GM12878 (cell line): ENCODE measurements at regions of chr7 and their contacts with region 1.

Region 1: DNA sequence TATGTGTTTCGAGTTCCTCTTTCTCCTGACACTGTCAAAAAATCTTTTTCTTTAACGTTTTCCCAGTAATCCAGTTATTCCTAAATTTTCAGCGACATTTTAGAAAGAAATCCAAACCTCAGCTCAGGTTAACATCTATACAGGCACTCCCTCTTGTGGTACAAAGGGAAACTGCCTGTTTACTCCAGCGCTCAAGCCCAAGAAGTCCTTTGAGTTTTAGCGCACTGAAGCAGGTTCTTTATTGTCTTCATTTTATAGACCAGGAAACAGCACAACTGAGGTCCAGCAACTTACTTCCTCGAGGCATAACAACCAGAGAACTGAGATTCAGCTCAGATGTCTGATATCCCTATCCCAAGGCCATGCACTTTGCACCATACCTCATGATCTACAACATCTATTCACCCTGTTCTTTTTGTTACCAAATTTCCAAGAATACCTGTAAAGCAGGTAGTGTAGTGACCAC is 287.2 kb upstream of the MKLN1 start:
- DNase-seq: no peak
- ATAC-seq: peak; percentile 83
- H3K4me3 ChIP-seq: no peak overlapping the region
- H3K27ac ChIP-seq: peak overlapping the region; percentile 72
- H3K4me1 ChIP-seq: peaks cover 22% of the 10 kb centered on the region
- H3K27me3 ChIP-seq: no peaks in the 10 kb centered on the region
- CTCF ChIP-seq: peak; percentile 84 to 96 (median 88)
- EP300 ChIP-seq: no peak
- POLR2A ChIP-seq: no peak
- RAD21 ChIP-seq: peak; percentile 97

Region 2: GRCh38 chr7:130875265-130875741 is 165.2 kb before region 1 on chr7:
- CTCF ChIA-PET with region 1: interaction called, 46 read pairs
- POLR2A ChIA-PET with region 1: no interaction called
- RAD21 ChIA-PET with region 1: interaction called, 8 read pairs
- SMC1A ChIA-PET with region 1: interaction called, 20 read pairs
- in situ Hi-C with region 1: no loop called
- intact Hi-C with region 1: loop called (anchors 1 kb)
- DNase-seq: no peak
- ATAC-seq: peak; percentile 90
- H3K4me3 ChIP-seq: no peak overlapping the region
- H3K27ac ChIP-seq: no peak overlapping the region
- H3K4me1 ChIP-seq: no peaks in the 10 kb centered on the region
- H3K27me3 ChIP-seq: no peaks in the 10 kb centered on the region
- CTCF ChIP-seq: peak; percentile 70 to 94 (median 88)
- EP300 ChIP-seq: no peak
- POLR2A ChIP-seq: peak; percentile 57; the same call in 1 of the 2 replicates
- RAD21 ChIP-seq: peak; percentile 88

Region 3: DNA sequence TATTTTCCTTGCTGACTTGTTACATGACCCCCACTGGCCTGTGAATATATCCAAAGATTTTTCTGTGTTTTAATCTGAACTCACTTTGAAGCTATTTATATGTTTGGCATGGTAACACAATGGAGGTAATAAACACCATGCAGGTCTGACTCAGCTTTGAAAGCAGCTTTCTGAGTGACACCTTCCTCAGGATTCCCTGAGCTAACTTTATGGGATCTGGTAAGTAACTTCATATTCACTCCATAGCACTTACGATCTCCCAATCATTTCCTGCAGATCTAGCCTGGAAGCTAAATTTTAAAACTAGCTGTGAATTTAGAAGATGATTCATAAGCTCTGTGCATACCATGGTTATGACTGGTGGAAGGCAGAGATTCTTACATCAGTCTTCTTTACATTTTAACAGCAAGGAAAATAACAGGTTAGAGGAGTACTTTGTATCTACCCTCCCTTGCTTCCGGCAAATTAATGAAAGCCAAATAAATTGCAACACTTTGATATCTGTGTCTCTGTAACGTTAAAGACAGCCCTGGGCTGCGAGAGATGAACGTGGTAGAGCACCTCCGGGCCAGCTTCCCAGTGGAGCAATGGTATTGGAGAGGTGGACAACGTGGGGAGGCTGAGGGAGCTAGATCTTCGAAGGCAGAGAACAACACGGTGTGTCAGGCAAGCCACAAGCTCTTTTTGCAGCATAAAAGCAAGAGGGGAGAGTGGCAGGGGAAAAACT is 136.3 kb before region 1 on chr7:
- CTCF ChIA-PET with region 1: interaction called, 166 read pairs
- POLR2A ChIA-PET with region 1: interaction called, 4 read pairs
- RAD21 ChIA-PET with region 1: interaction called, 77 read pairs
- SMC1A ChIA-PET with region 1: interaction called, 84 read pairs
- in situ Hi-C with region 1: loop called (anchors 5 kb)
- intact Hi-C with region 1: no loop called
- DNase-seq: no peak
- ATAC-seq: no peak
- H3K4me3 ChIP-seq: no peak overlapping the region
- H3K27ac ChIP-seq: peak overlapping the region; percentile 16; the same call in 1 of the 2 replicates
- H3K4me1 ChIP-seq: peaks cover 36% of the 10 kb centered on the region
- H3K27me3 ChIP-seq: no peaks in the 10 kb centered on the region
- CTCF ChIP-seq: no peak
- EP300 ChIP-seq: no peak
- POLR2A ChIP-seq: no peak
- RAD21 ChIP-seq: no peak

Region 4: DNA sequence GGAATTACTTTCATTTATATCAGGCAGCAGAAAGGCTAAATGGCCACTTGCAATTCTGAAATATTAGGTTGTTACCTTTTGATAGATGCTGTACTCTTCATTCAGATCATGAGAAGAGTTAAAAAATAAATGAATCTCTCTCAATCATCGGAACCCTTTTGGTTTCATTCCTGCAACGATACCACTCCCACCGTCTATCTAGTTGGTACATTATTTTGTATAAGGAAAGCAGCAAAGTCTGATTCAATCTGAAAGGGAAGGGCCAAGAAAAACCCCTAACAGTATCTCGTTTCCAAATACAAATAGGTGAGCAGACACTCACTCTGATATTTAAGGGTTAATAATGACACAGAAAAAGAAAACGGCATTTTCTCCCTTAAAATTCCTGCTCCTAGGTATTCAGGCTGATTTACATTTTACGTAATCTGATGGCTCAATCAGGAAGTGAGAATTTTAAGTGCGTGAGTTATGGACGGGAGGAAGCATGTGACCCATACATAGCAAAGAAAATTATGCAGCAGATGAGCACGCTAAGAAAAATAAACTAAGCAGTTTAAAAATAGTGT is 97.1 kb before region 1 on chr7:
- CTCF ChIA-PET with region 1: interaction called, 17 read pairs
- POLR2A ChIA-PET with region 1: interaction called, 5 read pairs
- RAD21 ChIA-PET with region 1: interaction called, 4 read pairs
- SMC1A ChIA-PET with region 1: interaction called, 10 read pairs
- in situ Hi-C with region 1: no loop called
- intact Hi-C with region 1: no loop called
- DNase-seq: no peak
- ATAC-seq: peak; percentile 22
- H3K4me3 ChIP-seq: peak overlapping the region; percentile 39
- H3K27ac ChIP-seq: peak overlapping the region; percentile 78
- H3K4me1 ChIP-seq: peaks cover 36% of the 10 kb centered on the region
- H3K27me3 ChIP-seq: no peaks in the 10 kb centered on the region
- CTCF ChIP-seq: no peak
- EP300 ChIP-seq: peak in 1 of 2 experiments; percentile 43; a peak in 2 of 4 replicates
- POLR2A ChIP-seq: no peak
- RAD21 ChIP-seq: no peak

Region 5: GRCh38 chr7:130975731-130976130 is 64.8 kb before region 1 on chr7:
- CTCF ChIA-PET with region 1: interaction called, 150 read pairs
- POLR2A ChIA-PET with region 1: no interaction called
- RAD21 ChIA-PET with region 1: interaction called, 80 read pairs
- SMC1A ChIA-PET with region 1: interaction called, 111 read pairs
- in situ Hi-C with region 1: no loop called
- intact Hi-C with region 1: no loop called
- DNase-seq: no peak
- ATAC-seq: no peak
- H3K4me3 ChIP-seq: no peak overlapping the region
- H3K27ac ChIP-seq: no peak overlapping the region
- H3K4me1 ChIP-seq: peaks cover 4% of the 10 kb centered on the region; the same call in 1 of the 2 replicates
- H3K27me3 ChIP-seq: no peaks in the 10 kb centered on the region
- CTCF ChIP-seq: no peak
- EP300 ChIP-seq: no peak
- POLR2A ChIP-seq: no peak
- RAD21 ChIP-seq: no peak

Region 6: GRCh38 chr7:130996841-130997231 is 43.7 kb before region 1 on chr7:
- CTCF ChIA-PET with region 1: interaction called, 22 read pairs
- POLR2A ChIA-PET with region 1: no interaction called
- RAD21 ChIA-PET with region 1: interaction called, 12 read pairs
- SMC1A ChIA-PET with region 1: interaction called, 22 read pairs
- in situ Hi-C with region 1: no loop called
- intact Hi-C with region 1: no loop called
- DNase-seq: no peak
- ATAC-seq: peak; percentile 45
- H3K4me3 ChIP-seq: no peak overlapping the region
- H3K27ac ChIP-seq: no peak overlapping the region
- H3K4me1 ChIP-seq: peaks cover 18% of the 10 kb centered on the region
- H3K27me3 ChIP-seq: no peaks in the 10 kb centered on the region
- CTCF ChIP-seq: no peak
- EP300 ChIP-seq: no peak
- POLR2A ChIP-seq: no peak; the same call in 1 of the 2 replicates
- RAD21 ChIP-seq: no peak

Region 7: DNA sequence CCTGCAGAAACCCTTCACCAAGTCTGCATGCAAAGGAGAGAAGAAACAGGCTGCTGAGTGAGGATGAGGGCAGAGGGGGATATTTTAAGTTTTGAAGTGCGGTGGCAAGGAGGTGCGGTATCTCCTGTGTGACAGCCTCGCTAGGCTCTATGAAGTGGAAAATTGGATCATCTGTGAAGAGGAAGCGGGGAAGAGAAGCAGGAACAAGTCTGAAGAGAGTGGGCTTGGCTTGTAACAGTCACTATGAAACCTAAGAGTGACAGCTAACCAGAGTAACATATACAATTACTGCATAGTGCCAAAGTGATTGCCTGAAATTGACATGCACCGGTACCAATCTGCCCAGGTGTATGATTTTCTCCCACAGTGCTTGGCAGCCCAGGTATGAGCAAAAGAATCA is 19.0 kb before region 1 on chr7:
- CTCF ChIA-PET with region 1: interaction called, 18 read pairs
- POLR2A ChIA-PET with region 1: interaction called, 4 read pairs
- RAD21 ChIA-PET with region 1: interaction called, 7 read pairs
- SMC1A ChIA-PET with region 1: interaction called, 24 read pairs
- in situ Hi-C with region 1: no loop called
- intact Hi-C with region 1: no loop called
- DNase-seq: no peak
- ATAC-seq: peak; percentile 78
- H3K4me3 ChIP-seq: peak overlapping the region; percentile 33
- H3K27ac ChIP-seq: peak overlapping the region; percentile 80
- H3K4me1 ChIP-seq: peaks cover 40% of the 10 kb centered on the region
- H3K27me3 ChIP-seq: no peaks in the 10 kb centered on the region
- CTCF ChIP-seq: no peak
- EP300 ChIP-seq: peak in 1 of 2 experiments; percentile 17; a peak in 1 of 4 replicates
- POLR2A ChIP-seq: no peak; the same call in 1 of the 2 replicates
- RAD21 ChIP-seq: no peak

Region 8: DNA sequence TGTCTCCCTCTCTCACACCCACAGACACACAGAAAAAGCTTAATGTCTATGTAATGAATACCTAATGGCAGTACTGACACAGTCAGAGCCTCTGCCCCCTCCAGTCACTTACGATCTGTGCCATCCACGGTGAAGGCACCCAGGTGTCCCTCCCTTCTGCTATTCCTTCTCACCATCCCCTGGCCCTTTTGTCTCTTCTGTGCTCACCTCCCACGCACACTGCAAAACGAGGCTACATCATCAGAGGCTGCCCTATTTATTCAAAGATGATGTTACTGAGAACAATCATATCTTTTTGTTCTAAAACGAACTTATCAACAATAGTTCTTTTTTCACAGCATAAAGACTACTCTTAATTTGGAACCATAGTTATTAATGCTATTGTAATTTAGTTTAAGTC is 40.3 kb after region 1 on chr7:
- CTCF ChIA-PET with region 1: no interaction called
- POLR2A ChIA-PET with region 1: no interaction called
- RAD21 ChIA-PET with region 1: no interaction called
- SMC1A ChIA-PET with region 1: no interaction called
- in situ Hi-C with region 1: no loop called
- intact Hi-C with region 1: no loop called
- DNase-seq: no peak
- ATAC-seq: no peak
- H3K4me3 ChIP-seq: no peak overlapping the region
- H3K27ac ChIP-seq: no peak overlapping the region
- H3K4me1 ChIP-seq: no peaks in the 10 kb centered on the region
- H3K27me3 ChIP-seq: no peaks in the 10 kb centered on the region
- CTCF ChIP-seq: no peak
- EP300 ChIP-seq: no peak
- POLR2A ChIP-seq: no peak
- RAD21 ChIP-seq: no peak